CD8-positive, alpha-beta T cell (primary cell): ENCODE measurements at regions of chr20 and their contacts with region 1.

Region 1: DNA sequence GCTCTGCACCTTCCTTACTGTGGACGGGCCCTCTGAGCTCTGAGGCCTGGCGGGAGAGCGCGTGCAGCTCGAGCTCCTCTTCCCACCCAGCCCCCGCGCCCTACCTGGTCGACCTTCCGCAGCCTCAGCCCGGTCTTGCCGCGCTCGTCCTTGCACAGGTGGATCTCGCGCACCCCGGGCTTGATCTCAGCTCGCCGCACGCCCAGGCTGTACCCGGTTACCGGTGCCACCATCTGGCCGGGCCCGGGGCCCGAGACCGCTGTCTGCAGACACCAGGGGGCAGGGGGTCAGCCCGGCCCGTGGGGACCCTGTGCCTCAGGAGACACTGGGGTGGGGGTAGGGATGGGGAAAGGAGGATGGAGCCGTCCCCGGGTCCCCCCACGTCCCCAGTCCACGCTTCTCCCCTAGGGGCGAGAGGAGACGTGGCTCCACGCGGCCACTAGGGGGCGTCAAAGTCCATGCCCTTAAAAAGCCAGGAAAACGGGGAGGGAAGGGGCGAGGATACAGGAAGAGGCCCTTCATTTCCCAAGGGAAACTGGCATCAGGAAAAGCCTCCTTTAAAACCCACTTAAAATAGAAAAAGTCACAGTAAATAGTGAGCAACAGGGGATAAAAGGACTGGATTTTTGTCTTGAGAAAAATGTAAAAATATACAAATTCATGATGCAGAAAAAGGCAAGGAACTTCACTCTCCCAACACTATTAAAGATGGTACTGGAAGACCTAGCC is 15.5 kb downstream of the SDCBP2 start:
- DNase-seq: peak; percentile 20 to 83 (median 69)
- ATAC-seq: peak; percentile 82
- H3K4me3 ChIP-seq: no peak overlapping the region
- H3K4me3 Mint-ChIP-seq: no peak overlapping the region
- H3K27ac ChIP-seq: no peak overlapping the region
- H3K27ac Mint-ChIP-seq: no peak overlapping the region
- H3K4me1 ChIP-seq: peaks cover 6% of the 10 kb centered on the region
- H3K4me1 Mint-ChIP-seq: peaks cover 8% of the 10 kb centered on the region
- H3K27me3 ChIP-seq: no peaks in the 10 kb centered on the region
- H3K27me3 Mint-ChIP-seq: no peaks in the 10 kb centered on the region
- CTCF ChIP-seq: peak; percentile 99

Region 2: DNA sequence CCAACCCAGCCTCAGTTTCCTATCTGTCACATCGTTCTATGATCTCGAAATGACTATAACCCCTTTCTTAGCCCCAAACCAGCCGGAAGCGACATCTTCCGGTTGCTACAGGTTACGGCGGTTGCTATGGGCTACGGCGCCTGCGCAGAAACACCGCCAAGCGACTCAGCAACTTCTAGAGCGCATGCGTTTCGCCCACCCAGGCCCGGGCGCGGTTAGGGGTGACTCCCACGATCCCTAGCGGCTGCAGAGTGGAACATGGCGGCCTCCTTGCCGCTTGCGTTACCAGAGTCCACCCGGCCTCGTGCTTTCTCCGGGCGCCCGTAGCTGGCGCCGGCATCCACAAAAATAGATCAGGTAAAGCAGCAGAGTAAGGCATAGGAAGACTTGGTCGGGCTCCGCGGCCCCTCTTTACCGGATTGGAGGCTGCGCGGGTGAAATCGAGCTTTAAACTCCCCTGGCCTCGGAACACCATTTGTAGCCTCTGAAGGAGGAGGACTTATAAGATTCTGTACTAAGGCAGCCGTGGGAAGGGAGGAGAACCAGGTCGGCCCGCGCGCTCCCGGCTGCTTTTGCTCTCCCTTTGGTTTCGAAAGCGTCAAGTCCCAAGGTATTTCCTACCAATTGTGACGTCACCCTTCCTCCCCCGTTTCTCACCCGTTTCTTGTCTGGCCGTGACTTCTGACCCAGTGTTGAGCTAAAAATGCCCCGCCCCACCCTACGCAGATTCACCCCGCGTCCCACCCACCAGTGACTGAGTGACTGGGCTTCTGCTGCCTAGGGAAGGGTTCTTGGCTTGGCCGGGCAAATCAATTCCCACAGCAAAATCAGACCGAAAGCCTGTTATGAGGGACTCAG is 12.0 kb after region 1 on chr20:
- CTCF ChIA-PET with region 1: interaction called, 7 read pairs
- POLR2A ChIA-PET with region 1: interaction called, 4 read pairs
- intact Hi-C with region 1: loop called in 1 of 2 experiments (anchors 1 kb)
- DNase-seq: peak; percentile 98 to 100 (median 99)
- ATAC-seq: peak; percentile 86
- H3K4me3 ChIP-seq: peak overlapping the region; percentile 81 to 97
- H3K4me3 Mint-ChIP-seq: no peak overlapping the region
- H3K27ac ChIP-seq: peak overlapping the region; percentile 94 to 99
- H3K27ac Mint-ChIP-seq: no peak overlapping the region
- H3K4me1 ChIP-seq: peaks cover 38% of the 10 kb centered on the region
- H3K4me1 Mint-ChIP-seq: peaks cover 20% of the 10 kb centered on the region
- H3K27me3 ChIP-seq: no peaks in the 10 kb centered on the region
- H3K27me3 Mint-ChIP-seq: no peaks in the 10 kb centered on the region
- CTCF ChIP-seq: no peak